Gastrocnemius medialis (tissue), 4 donors: ENCODE measurements at regions of chr9 and their contacts with region 1.

Region 1: GRCh38 chr9:70395652-70396051 is 18.8 kb downstream of the KLF9 start:
- DNase-seq: no peak
- ATAC-seq: no peak
- H3K4me3 ChIP-seq: peak overlapping the region in 1 of 4 donors; percentile 26
- H3K27ac ChIP-seq: peak overlapping the region; percentile 15 to 100 (median 68)
- H3K4me1 ChIP-seq: peaks cover 99 to 100% of the 10 kb centered on the region in 2 donors
- H3K27me3 ChIP-seq: no peaks in the 10 kb centered on the region
- CTCF ChIP-seq: no peak
- POLR2A ChIP-seq: no peak

Region 2: DNA sequence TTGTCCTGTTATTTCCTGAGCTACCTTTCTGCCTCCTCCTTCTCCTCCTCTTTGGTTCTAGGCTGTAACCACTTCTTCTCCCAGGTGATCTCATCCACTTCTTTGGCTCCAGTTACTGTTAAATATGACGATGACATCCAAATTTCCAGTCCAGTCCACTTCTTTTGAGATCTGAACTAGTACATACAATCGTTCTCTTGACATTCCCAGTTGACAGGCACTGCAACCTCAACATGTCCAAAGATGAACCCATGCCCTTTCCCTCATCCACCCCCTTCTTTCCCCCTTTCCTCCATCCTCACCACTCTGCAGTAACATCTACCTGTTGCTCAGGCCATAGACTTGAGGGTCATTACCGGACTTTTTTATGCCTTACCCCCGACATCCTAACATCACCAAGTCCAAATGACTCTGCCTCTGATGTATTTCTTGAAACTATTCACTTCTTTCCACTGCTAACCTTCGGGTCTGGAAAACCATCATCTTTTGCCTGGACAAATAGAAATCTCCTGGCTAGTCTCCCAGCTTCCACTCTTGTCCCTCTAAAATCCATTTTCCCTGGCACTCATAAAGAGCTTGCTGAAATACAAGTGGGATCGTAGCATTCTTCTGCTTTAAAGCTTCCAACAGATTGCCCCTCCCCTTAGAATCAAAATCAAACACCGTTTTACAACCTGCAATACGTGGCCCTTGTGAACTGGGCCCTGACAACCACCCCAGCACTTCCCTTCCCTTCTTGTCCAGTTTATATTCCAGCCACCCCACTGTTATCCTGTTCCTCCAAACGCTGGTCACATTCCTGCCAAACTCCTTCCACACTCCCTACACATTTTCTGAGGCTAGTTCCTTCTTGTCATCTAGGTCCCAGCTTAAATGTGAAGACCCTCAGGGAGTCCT is 12.7 kb before region 1 on chr9:
- in situ Hi-C with region 1: no loop called
- intact Hi-C with region 1: loop called (anchors 2 kb)
- DNase-seq: no peak
- ATAC-seq: no peak
- H3K4me3 ChIP-seq: no peak overlapping the region
- H3K27ac ChIP-seq: peak overlapping the region; percentile 20 to 52 (median 41)
- H3K4me1 ChIP-seq: peaks cover 54 to 58% of the 10 kb centered on the region in 2 donors
- H3K27me3 ChIP-seq: no peaks in the 10 kb centered on the region
- CTCF ChIP-seq: no peak
- POLR2A ChIP-seq: no peak

Region 3: DNA sequence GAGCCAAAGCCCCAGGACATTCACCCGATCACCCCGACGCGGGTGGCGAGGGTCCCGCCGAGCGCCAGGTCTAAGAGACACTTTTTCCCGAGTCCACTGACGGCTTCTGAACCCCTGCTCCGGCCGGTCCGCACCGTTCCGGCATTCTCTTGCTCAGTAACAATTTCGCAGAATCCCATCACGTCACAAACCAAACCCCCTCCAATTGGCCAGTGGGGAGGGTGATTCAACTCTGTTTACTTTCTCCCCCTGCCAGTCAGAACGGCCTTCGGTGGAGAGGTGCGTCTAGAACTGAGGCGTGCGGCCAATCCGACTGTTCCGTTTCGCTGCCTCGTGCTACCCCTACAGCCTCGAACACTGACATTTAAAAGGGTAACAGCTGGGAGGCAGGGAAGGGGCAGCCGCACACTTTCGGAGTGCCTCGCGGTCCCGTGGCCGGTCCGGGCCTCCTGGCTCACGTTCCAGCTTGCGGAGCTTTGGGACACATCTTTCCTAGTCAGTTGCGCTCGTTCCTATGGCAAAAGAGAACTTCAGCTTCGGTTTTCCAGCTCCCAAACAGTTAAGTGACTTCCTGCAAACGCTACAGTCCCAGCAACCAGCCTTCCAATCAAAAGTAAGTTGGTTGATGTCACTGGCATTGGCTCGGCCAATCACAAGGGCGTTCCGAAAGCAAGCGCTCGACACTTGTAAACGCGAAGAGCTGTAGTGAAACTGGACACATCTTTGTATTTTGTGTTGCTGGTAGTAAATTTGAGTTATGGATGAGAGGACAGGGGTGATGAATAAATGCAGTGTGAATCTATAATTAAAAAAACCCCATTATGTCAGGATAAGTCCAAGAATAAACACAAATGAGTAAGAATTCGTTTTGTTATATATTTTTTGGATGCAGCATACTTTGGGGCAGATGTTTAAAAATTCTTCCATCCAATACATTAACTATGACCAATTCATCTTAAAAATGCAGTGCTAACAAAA is 18.4 kb after region 1 on chr9 and contains the start of gene KLF9:
- in situ Hi-C with region 1: no loop called
- intact Hi-C with region 1: no loop called
- DNase-seq: peak; percentile 98 to 99
- ATAC-seq: peak; percentile 57 to 61
- H3K4me3 ChIP-seq: peak within 1 kb of the TSS; percentile 76 to 99 (median 96)
- H3K27ac ChIP-seq: peak within 1 kb of the TSS; percentile 92 to 100 (median 100)
- H3K4me1 ChIP-seq: peaks cover 46 to 52% of the 10 kb centered on the region in 2 donors
- H3K27me3 ChIP-seq: no peaks in the 10 kb centered on the region
- CTCF ChIP-seq: no peak
- POLR2A ChIP-seq: no peak
- total RNA-seq, gene KLF9: 122 to 174 (median 169) TPM